Naive thymus-derived CD4-positive, alpha-beta T cell (primary cell): ENCODE measurements at regions of chr4 and their contacts with region 1.

Region 1: DNA sequence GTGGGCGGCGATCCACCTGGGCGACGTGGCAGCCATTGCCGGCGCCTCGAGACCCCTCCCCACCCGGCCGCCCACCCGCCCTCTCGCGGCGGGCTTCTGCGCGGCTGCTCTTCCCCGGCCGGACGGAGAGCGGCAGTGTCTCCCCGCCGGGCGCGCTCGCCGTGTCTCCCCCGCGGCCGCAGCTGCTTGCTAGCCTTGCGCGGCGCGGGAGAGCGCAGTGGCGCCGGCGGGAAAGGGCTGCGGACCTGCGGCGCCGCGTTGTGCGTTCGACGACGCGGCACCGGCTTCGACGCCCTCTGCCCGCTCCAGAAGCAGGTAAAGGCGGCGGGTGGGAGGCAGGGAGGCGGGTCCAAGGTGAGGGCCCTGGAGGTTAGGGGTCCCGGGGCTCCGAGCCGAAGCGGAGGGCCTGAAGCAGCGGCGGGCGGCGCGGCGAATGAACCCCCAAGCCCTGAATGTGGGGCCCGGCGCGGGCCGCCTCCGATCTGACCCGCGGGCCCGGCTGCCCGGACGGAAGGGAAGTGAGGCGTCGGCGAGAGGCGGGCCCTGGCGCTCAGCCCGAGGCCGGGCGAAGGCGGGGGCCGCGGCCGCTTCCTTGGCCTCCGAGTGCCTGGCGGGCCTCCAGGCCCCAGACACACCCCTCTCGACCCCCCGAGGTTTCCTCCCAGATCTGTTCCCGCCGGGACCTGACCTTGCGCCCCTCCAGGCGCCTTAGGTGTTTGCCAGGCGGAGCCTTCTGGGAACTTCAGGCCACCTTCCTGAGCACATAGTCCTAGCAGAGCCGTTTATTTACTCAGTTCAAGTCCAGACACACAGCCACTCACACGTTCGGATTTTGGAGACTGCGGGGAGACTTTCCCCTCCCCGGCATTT is at the start of gene N4BP2:
- DNase-seq: peak; percentile 58 to 82 (median 76)
- ATAC-seq: peak; percentile 79
- H3K4me3 ChIP-seq: peak within 1 kb of the TSS; percentile 80
- H3K4me3 Mint-ChIP-seq: peak within 1 kb of the TSS; percentile 91 to 100 (median 97)
- H3K27ac ChIP-seq: peak within 1 kb of the TSS; percentile 91
- H3K27ac Mint-ChIP-seq: peak within 1 kb of the TSS; percentile 94 to 99 (median 98)
- H3K4me1 ChIP-seq: peaks cover 14 to 15% of the 10 kb centered on the region in 2 donors
- H3K4me1 Mint-ChIP-seq: peaks cover 19 to 48% (median 36%) of the 10 kb centered on the region in 7 donors
- H3K27me3 ChIP-seq: no peaks in the 10 kb centered on the region
- H3K27me3 Mint-ChIP-seq: peaks cover 0 to 6% (median 0%) of the 10 kb centered on the region in 5 donors
- total RNA-seq, gene N4BP2: 16.0 to 37.2 (median 22.2) TPM

Region 2: GRCh38 chr4:39353478-39354253 is 703.3 kb before region 1 on chr4:
- CTCF ChIA-PET with region 1: no interaction called
- POLR2A ChIA-PET with region 1: no interaction called
- intact Hi-C with region 1: loop called in 1 of 2 experiments (anchors 1 kb)
- DNase-seq: peak in 7 of 9 donors; percentile 39 to 71 (median 63)
- ATAC-seq: peak; percentile 86
- H3K4me3 ChIP-seq: peak overlapping the region; percentile 48
- H3K4me3 Mint-ChIP-seq: peak overlapping the region; percentile 82 to 89 (median 84)
- H3K27ac ChIP-seq: peak overlapping the region; percentile 70
- H3K27ac Mint-ChIP-seq: peak overlapping the region; percentile 88 to 98 (median 95)
- H3K4me1 ChIP-seq: peaks cover 17 to 34% of the 10 kb centered on the region in 2 donors
- H3K4me1 Mint-ChIP-seq: peaks cover 20 to 75% (median 59%) of the 10 kb centered on the region in 7 donors
- H3K27me3 ChIP-seq: no peaks in the 10 kb centered on the region
- H3K27me3 Mint-ChIP-seq: no peaks in the 10 kb centered on the region

Region 3: DNA sequence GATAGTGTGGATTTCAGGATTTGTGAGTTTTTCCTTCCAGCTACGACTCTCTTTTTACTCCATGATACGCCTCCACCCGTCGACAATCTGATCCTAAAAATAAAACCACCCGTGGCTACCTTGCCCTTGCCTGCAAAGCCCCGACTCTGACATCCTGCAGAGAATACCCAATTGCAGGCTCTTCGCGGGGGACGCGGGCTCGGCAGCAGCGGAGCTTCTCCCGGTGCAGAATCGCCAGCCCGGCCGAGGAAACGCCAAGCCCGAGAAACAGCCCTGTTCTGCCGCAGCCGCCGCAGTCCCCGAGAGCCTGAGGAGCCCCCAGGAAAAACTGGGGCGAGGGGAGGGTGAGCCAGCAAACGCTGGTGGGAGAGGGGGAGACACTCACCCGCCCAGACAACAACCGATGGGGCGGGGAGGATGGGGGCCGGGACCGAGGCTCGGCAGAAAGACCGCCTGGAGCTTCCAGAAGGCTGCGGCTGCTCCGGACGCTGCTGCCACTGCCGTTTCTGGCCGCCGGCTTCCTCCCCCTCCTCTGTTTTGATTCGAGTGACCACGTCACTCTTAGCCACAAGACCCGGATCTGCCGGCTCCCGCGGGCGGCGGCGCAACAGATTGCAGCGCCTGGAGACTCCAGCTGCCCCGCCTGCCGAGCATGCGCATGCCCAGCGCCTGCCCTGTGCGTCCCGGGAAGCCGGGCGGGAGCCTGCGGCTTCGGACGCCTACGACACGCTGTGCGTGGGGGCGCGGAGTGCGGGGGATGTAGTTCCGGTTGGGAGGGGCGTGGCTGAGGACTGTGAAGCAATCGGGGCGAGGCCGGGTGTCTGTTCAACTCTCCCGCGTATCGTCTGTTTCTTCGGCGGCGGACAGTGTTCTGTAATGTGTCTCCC is 418.4 kb before region 1 on chr4 and contains the start of gene SMIM14:
- CTCF ChIA-PET with region 1: no interaction called
- POLR2A ChIA-PET with region 1: no interaction called
- intact Hi-C with region 1: loop called (anchors 1 to 2 kb)
- DNase-seq: peak; percentile 69 to 96 (median 82)
- ATAC-seq: peak; percentile 92
- H3K4me3 ChIP-seq: peak within 1 kb of the TSS; percentile 77
- H3K4me3 Mint-ChIP-seq: peak within 1 kb of the TSS; percentile 86 to 97 (median 94)
- H3K27ac ChIP-seq: peak within 1 kb of the TSS; percentile 79
- H3K27ac Mint-ChIP-seq: peak within 1 kb of the TSS; percentile 67 to 96 (median 86)
- H3K4me1 ChIP-seq: peaks cover 12 to 13% of the 10 kb centered on the region in 2 donors
- H3K4me1 Mint-ChIP-seq: peaks cover 22 to 51% (median 44%) of the 10 kb centered on the region in 7 donors
- H3K27me3 ChIP-seq: no peaks in the 10 kb centered on the region
- H3K27me3 Mint-ChIP-seq: peaks cover 0 to 27% (median 0%) of the 10 kb centered on the region in 5 donors
- total RNA-seq, gene SMIM14: 4.6 to 15.1 (median 12.9) TPM

Region 4: DNA sequence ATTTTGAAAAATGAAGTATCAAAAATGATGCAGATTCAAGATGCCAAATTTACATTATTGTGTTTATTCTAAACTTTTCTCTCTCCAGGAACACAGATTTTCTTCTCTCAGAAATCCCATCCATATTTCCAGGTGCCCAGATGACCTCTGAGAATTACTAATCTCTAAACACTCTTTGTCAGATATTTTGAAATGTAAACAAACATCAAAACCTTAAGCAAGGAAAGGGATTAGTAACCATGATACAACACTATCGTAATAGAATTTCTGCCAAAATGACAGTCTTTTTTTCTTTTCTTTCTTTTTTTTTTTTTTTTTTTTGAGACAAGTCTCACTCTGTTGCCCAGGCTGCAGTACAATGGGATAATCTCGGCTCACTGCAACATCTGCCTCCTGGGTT is 156.0 kb before region 1 on chr4:
- CTCF ChIA-PET with region 1: no interaction called
- POLR2A ChIA-PET with region 1: no interaction called
- intact Hi-C with region 1: no loop called
- DNase-seq: no peak
- ATAC-seq: no peak
- H3K4me3 ChIP-seq: no peak overlapping the region
- H3K4me3 Mint-ChIP-seq: no peak overlapping the region
- H3K27ac ChIP-seq: no peak overlapping the region
- H3K27ac Mint-ChIP-seq: no peak overlapping the region
- H3K4me1 ChIP-seq: no peaks in the 10 kb centered on the region
- H3K4me1 Mint-ChIP-seq: peaks cover 0 to 3% (median 0%) of the 10 kb centered on the region in 7 donors
- H3K27me3 ChIP-seq: no peaks in the 10 kb centered on the region
- H3K27me3 Mint-ChIP-seq: no peaks in the 10 kb centered on the region

Region 5: GRCh38 chr4:40003986-40004385 is 53.0 kb before region 1 on chr4:
- CTCF ChIA-PET with region 1: no interaction called
- POLR2A ChIA-PET with region 1: no interaction called
- intact Hi-C with region 1: no loop called
- DNase-seq: no peak
- ATAC-seq: peak; percentile 64
- H3K4me3 ChIP-seq: no peak overlapping the region
- H3K4me3 Mint-ChIP-seq: no peak overlapping the region
- H3K27ac ChIP-seq: no peak overlapping the region
- H3K27ac Mint-ChIP-seq: peak overlapping the region in 1 of 9 donors; percentile 24
- H3K4me1 ChIP-seq: no peaks in the 10 kb centered on the region
- H3K4me1 Mint-ChIP-seq: peaks cover 0 to 2% (median 0%) of the 10 kb centered on the region in 7 donors
- H3K27me3 ChIP-seq: no peaks in the 10 kb centered on the region
- H3K27me3 Mint-ChIP-seq: no peaks in the 10 kb centered on the region

Region 6: GRCh38 chr4:40046311-40046980 is 10.5 kb before region 1 on chr4:
- CTCF ChIA-PET with region 1: no interaction called
- POLR2A ChIA-PET with region 1: no interaction called
- intact Hi-C with region 1: no loop called
- DNase-seq: peak in 1 of 9 donors; percentile 52
- ATAC-seq: no peak
- H3K4me3 ChIP-seq: no peak overlapping the region
- H3K4me3 Mint-ChIP-seq: peak overlapping the region in 1 of 10 donors; percentile 41
- H3K27ac ChIP-seq: no peak overlapping the region
- H3K27ac Mint-ChIP-seq: peak overlapping the region in 3 of 9 donors; percentile 0 to 62 (median 14)
- H3K4me1 ChIP-seq: no peaks in the 10 kb centered on the region
- H3K4me1 Mint-ChIP-seq: peaks cover 0 to 6% (median 5%) of the 10 kb centered on the region in 7 donors
- H3K27me3 ChIP-seq: no peaks in the 10 kb centered on the region
- H3K27me3 Mint-ChIP-seq: no peaks in the 10 kb centered on the region

Region 7: DNA sequence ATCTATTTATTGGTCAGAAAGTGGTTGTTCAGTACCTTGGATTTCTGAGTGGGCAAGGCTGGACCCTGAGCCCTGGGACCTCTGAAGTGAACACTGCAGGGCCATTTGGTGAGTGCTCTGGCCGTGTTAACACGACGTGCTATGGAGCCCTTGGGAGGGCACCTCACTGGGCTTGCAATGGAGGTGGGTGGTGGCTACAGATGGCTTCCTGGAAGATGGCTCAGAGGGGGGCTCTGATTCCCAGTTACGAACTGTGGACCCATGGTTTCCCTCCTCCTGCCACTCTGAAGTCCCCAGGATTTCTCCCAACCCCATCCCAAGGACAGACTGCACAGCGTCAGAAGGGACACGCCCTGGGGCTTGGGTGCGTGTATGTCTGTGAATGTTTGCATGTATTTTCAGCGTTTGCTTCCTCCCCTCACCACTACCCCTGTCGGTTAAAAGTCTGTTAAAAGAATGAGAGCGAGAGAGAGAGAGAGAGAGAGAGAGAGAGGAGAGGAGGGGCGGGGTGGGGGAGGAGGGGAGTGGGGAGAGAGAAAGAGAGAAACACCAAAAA is 136.1 kb after region 1 on chr4:
- CTCF ChIA-PET with region 1: no interaction called
- POLR2A ChIA-PET with region 1: interaction called, 8 read pairs
- intact Hi-C with region 1: loop called (anchors 1 to 2 kb)
- DNase-seq: peak in 8 of 9 donors; percentile 41 to 80 (median 74)
- ATAC-seq: peak; percentile 44
- H3K4me3 ChIP-seq: peak overlapping the region; percentile 61
- H3K4me3 Mint-ChIP-seq: peak overlapping the region; percentile 96 to 100 (median 99)
- H3K27ac ChIP-seq: peak overlapping the region; percentile 100
- H3K27ac Mint-ChIP-seq: peak overlapping the region; percentile 93 to 100 (median 99)
- H3K4me1 ChIP-seq: peaks cover 23 to 47% of the 10 kb centered on the region in 2 donors
- H3K4me1 Mint-ChIP-seq: peaks cover 47 to 80% (median 65%) of the 10 kb centered on the region in 7 donors
- H3K27me3 ChIP-seq: no peaks in the 10 kb centered on the region
- H3K27me3 Mint-ChIP-seq: peaks cover 0 to 4% (median 0%) of the 10 kb centered on the region in 5 donors

Region 8: GRCh38 chr4:40316782-40317635 is 260.1 kb after region 1 on chr4:
- CTCF ChIA-PET with region 1: interaction called, 10 read pairs
- POLR2A ChIA-PET with region 1: interaction called, 4 read pairs
- intact Hi-C with region 1: loop called (anchors 1 to 2 kb)
- DNase-seq: peak; percentile 39 to 83 (median 76)
- ATAC-seq: peak; percentile 81
- H3K4me3 ChIP-seq: peak overlapping the region; percentile 75
- H3K4me3 Mint-ChIP-seq: peak overlapping the region; percentile 79 to 93 (median 86)
- H3K27ac ChIP-seq: peak overlapping the region; percentile 92
- H3K27ac Mint-ChIP-seq: peak overlapping the region; percentile 90 to 99 (median 99)
- H3K4me1 ChIP-seq: peaks cover 7 to 19% of the 10 kb centered on the region in 2 donors
- H3K4me1 Mint-ChIP-seq: peaks cover 23 to 71% (median 61%) of the 10 kb centered on the region in 7 donors
- H3K27me3 ChIP-seq: no peaks in the 10 kb centered on the region
- H3K27me3 Mint-ChIP-seq: no peaks in the 10 kb centered on the region

Region 9: DNA sequence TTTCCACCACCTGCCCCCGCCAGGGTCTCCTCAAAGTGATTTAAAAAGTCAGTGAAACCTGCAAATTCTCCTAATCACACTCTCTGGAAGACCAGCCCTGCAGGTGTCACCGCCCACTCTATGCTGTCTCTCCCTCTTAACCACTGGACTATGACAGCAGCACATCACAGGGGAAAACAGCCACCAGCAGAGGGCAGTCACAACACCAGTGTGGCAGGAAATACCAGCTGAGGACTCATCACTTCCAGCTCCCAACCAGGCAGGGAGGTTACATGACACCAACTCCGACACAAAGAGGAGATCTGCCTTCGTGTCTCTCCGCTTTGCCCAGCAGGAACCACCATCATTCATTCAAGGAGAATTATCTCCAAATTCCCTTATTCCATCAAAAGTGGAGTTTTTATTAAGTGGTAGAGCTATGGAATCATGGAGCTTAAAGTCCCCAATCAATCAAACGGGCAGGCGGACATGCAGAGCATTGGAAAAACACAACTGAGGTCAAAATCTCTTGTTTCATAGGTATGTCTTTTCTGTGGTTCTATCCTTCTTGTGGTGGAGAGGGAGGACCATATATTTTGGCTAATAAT is 784.1 kb after region 1 on chr4:
- CTCF ChIA-PET with region 1: no interaction called
- POLR2A ChIA-PET with region 1: no interaction called
- intact Hi-C with region 1: loop called in 1 of 2 experiments (anchors 5 kb)
- DNase-seq: peak; percentile 8 to 75 (median 40)
- ATAC-seq: peak; percentile 87
- H3K4me3 ChIP-seq: no peak overlapping the region
- H3K4me3 Mint-ChIP-seq: no peak overlapping the region
- H3K27ac ChIP-seq: no peak overlapping the region
- H3K27ac Mint-ChIP-seq: no peak overlapping the region
- H3K4me1 ChIP-seq: no peaks in the 10 kb centered on the region
- H3K4me1 Mint-ChIP-seq: peaks cover 0 to 5% (median 0%) of the 10 kb centered on the region in 7 donors
- H3K27me3 ChIP-seq: no peaks in the 10 kb centered on the region
- H3K27me3 Mint-ChIP-seq: peaks cover 0 to 8% (median 0%) of the 10 kb centered on the region in 5 donors